ENCODE measurements at regions of chr3 and their contacts with region 1.

Region 1: GRCh38 chr3:62187022-62187431 is 186.3 kb downstream of the FEZF2 start:
- DNase-seq: peak; percentile 7 to 11 (median 9)
- ATAC-seq: peak; percentile 37; the same call in 1 of the 3 replicates
- H3K4me3 ChIP-seq: no peak overlapping the region
- H3K27ac ChIP-seq: no peak overlapping the region
- H3K4me1 ChIP-seq: no peaks in the 10 kb centered on the region
- H3K27me3 ChIP-seq: peaks cover 0 to 10% of the 10 kb centered on the region in 2 experiments; a peak in 2 of 5 replicates
- CTCF ChIP-seq: peak in 2 of 3 experiments; percentile 11 to 31; a peak in 3 of 6 replicates
- EP300 ChIP-seq: no peak
- POLR2A ChIP-seq: no peak
- RAD21 ChIP-seq: no peak

Region 2: DNA sequence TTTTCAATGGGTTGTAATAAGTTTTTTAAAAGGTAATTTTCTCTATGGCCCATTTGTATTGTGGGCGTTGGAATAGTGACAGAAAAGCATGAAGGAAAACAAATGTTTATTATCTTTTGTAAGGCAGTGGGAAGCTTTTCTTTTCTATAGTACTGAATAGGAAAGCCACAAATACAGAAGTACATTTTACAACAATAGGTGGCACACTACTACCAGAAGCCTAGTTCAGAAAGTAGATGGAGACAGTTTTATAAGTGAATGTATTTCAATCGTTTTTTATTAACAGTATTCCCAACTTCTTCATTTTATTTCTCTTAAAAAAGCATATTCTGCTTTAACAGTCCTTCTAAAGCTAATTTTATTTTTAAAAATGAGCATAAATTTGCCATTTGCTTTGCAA is 329.0 kb before region 1 on chr3:
- CTCF ChIA-PET with region 1: no interaction called
- POLR2A ChIA-PET with region 1: no interaction called
- in situ Hi-C with region 1: no loop called
- intact Hi-C with region 1: loop called (anchors 1 kb)
- DNase-seq: no peak
- ATAC-seq: no peak
- H3K4me3 ChIP-seq: no peak overlapping the region
- H3K27ac ChIP-seq: no peak overlapping the region
- H3K4me1 ChIP-seq: no peaks in the 10 kb centered on the region
- H3K27me3 ChIP-seq: no peaks in the 10 kb centered on the region
- CTCF ChIP-seq: peak in 1 of 3 experiments; percentile 32; a peak in 1 of 6 replicates
- EP300 ChIP-seq: no peak
- POLR2A ChIP-seq: no peak
- RAD21 ChIP-seq: peak in 1 of 2 experiments; percentile 31; a peak in 2 of 4 replicates

Measured in K562 (cell line).